ENCODE measurements at regions of chr1 and their contacts with region 1.

Region 1: DNA sequence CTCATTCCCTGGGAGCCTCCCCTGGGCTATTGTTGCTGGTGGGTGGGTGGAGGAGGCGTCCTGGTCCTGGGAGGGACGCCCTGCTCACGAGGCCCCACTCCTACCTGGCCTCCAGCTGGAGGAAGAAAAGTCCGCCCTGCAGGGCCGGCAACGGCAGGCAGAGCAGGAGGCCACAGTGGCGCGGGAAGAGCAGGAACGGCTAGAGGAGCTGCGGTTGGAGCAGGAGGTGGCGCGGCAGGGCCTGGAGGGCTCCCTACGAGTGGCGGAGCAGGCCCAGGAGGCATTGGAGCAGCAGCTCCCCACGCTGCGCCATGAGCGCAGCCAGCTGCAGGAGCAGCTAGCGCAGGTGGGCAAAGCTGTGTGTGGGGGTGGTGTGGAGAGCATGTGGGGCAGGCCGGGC is 24.9 kb downstream of the CROCC start:
- DNase-seq: no peak
- H3K4me3 Mint-ChIP-seq: no peak overlapping the region
- H3K27ac Mint-ChIP-seq: no peak overlapping the region
- H3K4me1 Mint-ChIP-seq: peaks cover 5% of the 10 kb centered on the region
- H3K27me3 Mint-ChIP-seq: no peaks in the 10 kb centered on the region
- CTCF ChIP-seq: no peak

Region 2: DNA sequence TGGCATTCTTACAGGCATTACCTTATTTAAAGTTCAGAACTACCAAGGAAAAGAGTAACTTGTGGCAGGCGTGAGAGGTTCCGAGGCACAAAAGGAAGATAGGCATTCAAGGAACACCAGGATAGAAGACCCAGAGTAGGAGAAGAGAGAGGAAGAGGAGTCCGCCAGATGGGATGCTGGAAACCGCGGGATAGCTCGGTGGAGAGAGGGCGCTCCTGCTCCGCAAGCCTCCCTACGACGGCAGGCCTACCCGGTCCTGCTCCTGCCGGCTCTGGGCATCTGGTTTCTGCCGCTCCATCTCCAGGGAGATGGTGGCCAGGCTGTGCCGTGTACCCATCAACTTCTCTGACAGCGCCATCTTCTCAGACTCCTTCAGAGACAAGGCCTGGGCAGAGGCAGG is 327.9 kb before region 1 on chr1:
- CTCF ChIA-PET with region 1: interaction called, 12 read pairs
- POLR2A ChIA-PET with region 1: interaction called, 15 read pairs
- intact Hi-C with region 1: loop called (anchors 1 kb)
- DNase-seq: no peak
- H3K4me3 Mint-ChIP-seq: no peak overlapping the region
- H3K27ac Mint-ChIP-seq: no peak overlapping the region
- H3K4me1 Mint-ChIP-seq: no peaks in the 10 kb centered on the region
- H3K27me3 Mint-ChIP-seq: no peaks in the 10 kb centered on the region
- CTCF ChIP-seq: no peak

Region 3: DNA sequence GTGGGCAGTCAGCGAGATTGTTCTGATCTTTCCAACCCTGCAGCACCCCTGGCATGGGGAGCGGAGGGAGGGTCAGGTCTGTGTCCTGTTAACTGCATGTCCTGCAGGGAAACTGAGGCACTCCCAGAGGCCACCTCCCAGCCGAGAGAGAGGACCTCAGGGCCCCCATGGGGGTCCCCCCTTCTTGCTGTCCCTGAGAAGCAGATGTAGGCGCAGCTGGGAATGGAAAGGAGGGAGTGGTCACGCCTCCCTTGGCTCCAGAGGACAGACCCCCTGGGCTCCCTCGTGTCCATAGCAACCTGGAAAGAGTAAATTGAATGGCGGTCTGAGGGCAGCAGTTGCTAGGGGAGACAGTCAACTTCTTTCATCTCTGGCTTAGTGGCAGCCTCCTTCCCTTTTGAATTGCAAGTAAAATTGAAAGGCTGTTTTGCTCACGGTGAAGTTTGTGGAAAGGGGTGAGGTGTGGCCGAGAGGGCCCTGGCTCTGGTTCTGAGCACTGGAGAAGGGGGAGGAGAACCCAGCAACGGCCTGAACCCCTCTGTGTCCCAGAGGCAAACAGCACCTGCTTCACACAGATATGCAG is 20.1 kb before region 1 on chr1:
- CTCF ChIA-PET with region 1: interaction called, 10 read pairs
- POLR2A ChIA-PET with region 1: interaction called, 27 read pairs
- intact Hi-C with region 1: no loop called
- DNase-seq: no peak
- H3K4me3 Mint-ChIP-seq: no peak overlapping the region
- H3K27ac Mint-ChIP-seq: peak overlapping the region; percentile 36
- H3K4me1 Mint-ChIP-seq: peaks cover 35% of the 10 kb centered on the region
- H3K27me3 Mint-ChIP-seq: no peaks in the 10 kb centered on the region
- CTCF ChIP-seq: no peak

Region 4: DNA sequence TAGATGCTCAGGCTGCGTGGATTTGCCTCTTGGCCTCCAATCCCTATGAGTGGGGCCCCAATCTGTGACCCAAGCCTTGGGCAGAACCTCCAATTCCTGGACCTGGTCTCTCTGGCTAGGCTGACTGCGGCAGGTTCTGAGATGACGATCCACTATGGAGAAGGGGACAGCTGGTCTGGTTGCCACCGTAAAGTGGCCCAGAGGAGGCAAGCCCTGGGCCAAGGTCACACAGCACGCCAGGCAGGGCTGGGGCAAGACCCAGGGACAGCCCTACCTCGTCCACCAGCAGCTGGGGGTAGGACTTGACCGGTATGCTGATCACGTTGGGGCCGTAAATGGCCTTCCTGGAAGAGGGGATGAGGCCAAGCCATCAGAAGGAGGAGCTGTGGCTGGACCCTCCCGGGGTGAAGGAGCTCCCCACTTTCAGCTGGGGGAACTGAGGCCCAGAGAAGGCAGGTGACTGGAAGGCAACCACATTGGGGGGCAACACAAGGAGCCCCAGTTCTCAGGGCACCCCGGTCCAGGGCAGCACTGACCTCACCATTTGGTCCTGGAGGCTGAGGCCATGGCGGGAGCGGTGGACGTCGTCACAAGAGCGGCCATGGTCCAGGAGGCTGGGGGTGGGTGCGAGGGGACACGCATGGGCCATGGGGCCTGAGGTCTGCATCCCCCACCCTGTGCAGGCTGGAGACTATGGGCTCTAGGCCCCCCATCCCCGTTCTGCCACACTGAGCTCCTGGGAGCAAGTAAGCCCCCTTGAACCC is 55.3 kb after region 1 on chr1:
- CTCF ChIA-PET with region 1: interaction called, 6 read pairs
- POLR2A ChIA-PET with region 1: interaction called, 6 read pairs
- intact Hi-C with region 1: loop called (anchors 2 kb)
- DNase-seq: no peak
- H3K4me3 Mint-ChIP-seq: no peak overlapping the region
- H3K27ac Mint-ChIP-seq: no peak overlapping the region
- H3K4me1 Mint-ChIP-seq: peaks cover 8% of the 10 kb centered on the region
- H3K27me3 Mint-ChIP-seq: no peaks in the 10 kb centered on the region
- CTCF ChIP-seq: no peak

Measured in MCF 10A (cell line).